Activated CD4-positive, alpha-beta memory T cell treated with anti-CD3 and anti-CD28 coated beads, Interleukin-2, amount 10 ng/mL, durations not matched to agents 7 days and 5 days (primary cell): ENCODE measurements at regions of chr1 and their contacts with region 1.

Region 1: GRCh38 chr1:35451125-35451528 is 106.1 kb downstream of the KIAA0319L start:
- DNase-seq: peak; percentile 81
- H3K4me3 Mint-ChIP-seq: no peak overlapping the region
- H3K27ac Mint-ChIP-seq: no peak overlapping the region
- H3K4me1 Mint-ChIP-seq: peaks cover 32% of the 10 kb centered on the region
- H3K27me3 Mint-ChIP-seq: no peaks in the 10 kb centered on the region

Region 2: DNA sequence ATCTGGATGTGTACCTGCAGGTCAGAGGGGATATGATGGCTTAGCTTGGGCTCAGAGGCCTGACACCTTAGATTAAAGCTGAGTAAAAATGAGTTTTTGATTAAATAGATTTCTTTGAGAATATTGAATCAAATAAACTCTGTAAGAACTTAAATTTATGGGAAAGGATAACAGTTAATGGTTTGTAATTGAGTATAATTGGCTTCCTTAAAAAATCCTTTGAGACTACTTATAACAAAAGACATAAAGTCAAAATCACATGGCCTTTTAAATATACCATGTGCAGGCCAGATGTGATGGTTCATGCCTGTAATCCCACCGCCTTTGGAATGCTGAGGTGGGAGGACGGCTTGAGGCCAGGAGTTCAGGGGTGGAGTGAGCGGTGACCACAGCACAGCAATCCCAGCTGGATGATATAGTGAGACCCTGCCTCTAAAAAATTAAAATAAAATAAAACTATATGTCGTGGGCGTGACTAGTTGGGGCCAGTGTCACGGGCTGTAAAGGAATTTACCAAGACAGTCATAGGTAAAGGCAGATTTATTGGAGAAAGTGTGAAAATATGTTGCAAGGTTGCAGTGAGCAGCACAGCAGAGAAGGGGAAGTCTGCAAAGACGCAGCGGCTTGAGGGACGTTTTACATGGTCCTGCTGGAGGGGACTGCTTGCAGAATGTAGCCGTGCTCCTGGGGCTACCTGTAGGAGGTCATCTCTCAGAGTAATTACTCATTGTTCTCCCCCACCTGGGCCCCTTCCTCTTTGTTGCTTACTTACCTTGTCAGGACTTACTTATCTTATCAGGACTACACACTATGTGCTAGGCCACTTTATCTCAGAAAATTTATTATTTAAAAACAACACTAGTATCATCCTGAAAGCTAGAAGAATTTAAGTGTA is 60.3 kb before region 1 on chr1:
- CTCF ChIA-PET with region 1: no interaction called
- POLR2A ChIA-PET with region 1: no interaction called
- DNase-seq: no peak
- H3K4me3 Mint-ChIP-seq: no peak overlapping the region
- H3K27ac Mint-ChIP-seq: no peak overlapping the region
- H3K4me1 Mint-ChIP-seq: no peaks in the 10 kb centered on the region
- H3K27me3 Mint-ChIP-seq: no peaks in the 10 kb centered on the region

Region 3: GRCh38 chr1:35461966-35462651 is 11.0 kb after region 1 on chr1:
- CTCF ChIA-PET with region 1: interaction called, 15 read pairs
- POLR2A ChIA-PET with region 1: no interaction called
- DNase-seq: no peak
- H3K4me3 Mint-ChIP-seq: no peak overlapping the region
- H3K27ac Mint-ChIP-seq: peak overlapping the region; percentile 37
- H3K4me1 Mint-ChIP-seq: peaks cover 25% of the 10 kb centered on the region
- H3K27me3 Mint-ChIP-seq: no peaks in the 10 kb centered on the region

Region 4: GRCh38 chr1:35544978-35545377 is 93.9 kb after region 1 on chr1:
- CTCF ChIA-PET with region 1: interaction called, 55 read pairs
- POLR2A ChIA-PET with region 1: interaction called, 9 read pairs
- DNase-seq: peak; percentile 59
- H3K4me3 Mint-ChIP-seq: no peak overlapping the region
- H3K27ac Mint-ChIP-seq: no peak overlapping the region
- H3K4me1 Mint-ChIP-seq: peaks cover 23% of the 10 kb centered on the region
- H3K27me3 Mint-ChIP-seq: no peaks in the 10 kb centered on the region

Region 5: GRCh38 chr1:35564037-35564883 is 113.1 kb after region 1 on chr1:
- CTCF ChIA-PET with region 1: interaction called, 159 read pairs
- POLR2A ChIA-PET with region 1: interaction called, 44 read pairs
- DNase-seq: peak; percentile 85
- H3K4me3 Mint-ChIP-seq: no peak overlapping the region
- H3K27ac Mint-ChIP-seq: no peak overlapping the region
- H3K4me1 Mint-ChIP-seq: peaks cover 22% of the 10 kb centered on the region
- H3K27me3 Mint-ChIP-seq: no peaks in the 10 kb centered on the region

Region 6: GRCh38 chr1:35777109-35777508 is 326.0 kb after region 1 on chr1:
- CTCF ChIA-PET with region 1: interaction called, 14 read pairs
- POLR2A ChIA-PET with region 1: no interaction called
- DNase-seq: no peak
- H3K4me3 Mint-ChIP-seq: no peak overlapping the region
- H3K27ac Mint-ChIP-seq: no peak overlapping the region
- H3K4me1 Mint-ChIP-seq: peaks cover 17% of the 10 kb centered on the region
- H3K27me3 Mint-ChIP-seq: no peaks in the 10 kb centered on the region